ENCODE measurements at regions of chr1 and their contacts with region 1.

Region 1: GRCh38 chr1:87328272-87329050 is at the start of gene LMO4:
- DNase-seq: peak; percentile 97
- ATAC-seq: peak; percentile 85
- total RNA-seq, gene LMO4: 42.0 TPM

Region 2: GRCh38 chr1:87212431-87213134 is 115.9 kb before region 1 on chr1:
- intact Hi-C with region 1: no loop called
- DNase-seq: no peak
- ATAC-seq: no peak

Region 3: GRCh38 chr1:87953732-87954344 is 625.4 kb after region 1 on chr1:
- intact Hi-C with region 1: loop called (anchors 5 kb)
- DNase-seq: peak; percentile 51
- ATAC-seq: peak; percentile 82

Region 4: GRCh38 chr1:88061492-88062177 is 733.2 kb after region 1 on chr1:
- intact Hi-C with region 1: loop called (anchors 10 kb)
- DNase-seq: no peak
- ATAC-seq: peak; percentile 85

Measured in Right ventricle myocardium superior (tissue), 1 donor.